ENCODE measurements at regions of chr12 and their contacts with region 1.

Region 1: DNA sequence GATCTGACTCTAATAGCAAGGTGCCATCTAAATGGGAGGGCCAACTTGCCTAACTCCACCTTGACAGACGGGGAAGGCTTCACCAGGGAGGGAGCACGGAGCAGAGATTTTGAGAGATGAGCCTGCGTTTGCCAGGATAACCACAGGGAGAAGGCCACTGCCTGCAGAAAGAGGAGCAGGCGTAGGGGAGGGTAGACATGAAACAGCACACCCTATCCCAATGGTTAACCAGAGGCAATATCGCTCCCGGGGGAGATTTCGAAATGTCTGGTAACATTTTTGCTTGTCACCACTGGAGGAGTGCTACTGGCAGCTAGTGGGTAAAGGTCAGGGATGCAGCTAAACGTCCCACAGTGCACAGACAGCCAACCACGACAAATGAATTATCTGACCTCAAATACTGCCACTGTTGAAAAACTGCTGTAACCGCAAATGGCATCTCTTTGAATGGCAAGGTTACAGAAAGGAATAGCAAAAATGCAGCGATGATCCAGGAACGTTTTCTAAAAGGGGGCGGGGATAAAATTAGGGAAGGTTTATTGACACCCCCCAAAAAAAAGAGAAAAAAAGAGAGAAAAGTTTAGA is 126.0 kb upstream of the ATF7IP start:
- DNase-seq: peak; percentile 60
- H3K4me3 Mint-ChIP-seq: peak overlapping the region; percentile 68
- H3K27ac Mint-ChIP-seq: peak overlapping the region; percentile 79
- H3K4me1 Mint-ChIP-seq: peaks cover 20% of the 10 kb centered on the region
- H3K27me3 Mint-ChIP-seq: no peaks in the 10 kb centered on the region

Region 2: GRCh38 chr12:13870255-13870654 is 369.2 kb before region 1 on chr12:
- CTCF ChIA-PET with region 1: no interaction called
- intact Hi-C with region 1: no loop called
- DNase-seq: no peak
- H3K4me3 Mint-ChIP-seq: no peak overlapping the region
- H3K27ac Mint-ChIP-seq: no peak overlapping the region
- H3K4me1 Mint-ChIP-seq: no peaks in the 10 kb centered on the region
- H3K27me3 Mint-ChIP-seq: peaks cover 7% of the 10 kb centered on the region

Region 3: DNA sequence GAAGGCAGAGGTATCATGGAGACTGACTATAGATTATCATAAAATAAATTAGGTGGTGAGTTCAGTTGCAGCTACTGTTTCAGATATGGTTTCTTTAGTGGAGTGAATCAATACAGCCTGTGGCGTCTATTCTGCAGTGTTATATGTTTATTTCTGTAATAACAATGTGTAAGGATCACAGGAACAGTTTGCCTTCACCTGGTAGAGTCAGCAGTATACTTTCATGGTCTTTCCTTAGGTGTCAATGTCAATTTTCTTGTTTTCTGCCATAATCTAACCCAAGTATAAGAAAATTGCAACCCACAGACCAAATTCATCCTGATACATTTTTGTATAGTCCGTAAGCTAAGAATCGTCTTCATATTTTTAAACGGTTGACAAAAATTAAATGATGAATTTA is 14.4 kb before region 1 on chr12:
- CTCF ChIA-PET with region 1: interaction called, 13 read pairs
- intact Hi-C with region 1: loop called (anchors 1 kb)
- DNase-seq: no peak
- H3K4me3 Mint-ChIP-seq: no peak overlapping the region
- H3K27ac Mint-ChIP-seq: no peak overlapping the region
- H3K4me1 Mint-ChIP-seq: peaks cover 11% of the 10 kb centered on the region
- H3K27me3 Mint-ChIP-seq: no peaks in the 10 kb centered on the region

Region 4: GRCh38 chr12:14365294-14366208 is 126.1 kb after region 1 on chr12 and contains the start of gene ATF7IP:
- CTCF ChIA-PET with region 1: interaction called, 33 read pairs
- intact Hi-C with region 1: loop called (anchors 1 kb)
- DNase-seq: peak; percentile 98
- H3K4me3 Mint-ChIP-seq: peak within 1 kb of the TSS; percentile 85
- H3K27ac Mint-ChIP-seq: peak within 1 kb of the TSS; percentile 98
- H3K4me1 Mint-ChIP-seq: peaks cover 38% of the 10 kb centered on the region
- H3K27me3 Mint-ChIP-seq: no peaks in the 10 kb centered on the region
- total RNA-seq, gene ATF7IP: 131 to 141 TPM

Region 5: DNA sequence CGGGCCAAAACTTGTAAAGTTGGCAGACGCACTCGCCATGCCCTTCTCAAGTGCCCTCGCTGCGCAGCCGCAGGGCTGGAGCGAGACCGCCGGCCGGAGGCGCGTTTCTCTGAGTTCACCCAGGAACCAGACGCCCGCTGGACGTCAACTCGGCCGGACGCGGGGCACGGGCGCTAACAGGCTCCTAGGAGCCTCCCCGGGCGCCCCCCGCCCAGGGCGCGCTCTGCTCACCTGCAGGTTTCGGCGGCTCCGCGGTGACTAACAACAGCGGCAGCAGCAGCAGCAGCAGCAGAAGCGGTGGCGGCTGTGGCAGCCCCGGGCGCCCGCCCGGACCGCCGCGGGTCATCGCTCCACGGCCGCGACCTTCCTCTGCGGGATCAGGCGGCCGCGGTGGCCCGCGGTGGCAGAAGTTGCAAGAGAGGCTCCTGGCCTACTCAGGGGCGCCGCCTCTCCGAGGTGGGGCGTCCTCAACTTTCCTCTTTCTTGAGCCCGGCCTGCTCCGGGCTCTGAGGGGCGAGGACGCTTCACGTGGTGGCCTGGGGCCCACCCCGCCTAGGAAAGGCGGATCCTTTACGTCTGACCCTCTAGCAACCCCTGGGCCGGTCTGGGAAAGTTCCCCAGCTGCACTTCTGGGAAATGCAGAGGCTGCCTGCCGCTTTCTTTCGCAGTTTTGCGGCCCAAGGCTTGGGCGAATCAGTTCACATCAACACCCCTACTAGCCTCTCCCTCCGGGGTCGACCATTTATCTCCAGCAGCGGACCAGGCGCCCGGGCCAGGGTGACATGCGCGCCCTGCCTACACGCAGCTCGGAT is 328.1 kb after region 1 on chr12 and contains the start of gene PLBD1:
- CTCF ChIA-PET with region 1: interaction called, 3 read pairs
- intact Hi-C with region 1: loop called (anchors 2 kb)
- DNase-seq: peak; percentile 30
- H3K4me3 Mint-ChIP-seq: peak within 1 kb of the TSS; percentile 30
- H3K27ac Mint-ChIP-seq: no peak within 1 kb of the TSS
- H3K4me1 Mint-ChIP-seq: peaks cover 3% of the 10 kb centered on the region
- H3K27me3 Mint-ChIP-seq: peaks cover 31% of the 10 kb centered on the region
- total RNA-seq, gene PLBD1: not detected

Region 6: DNA sequence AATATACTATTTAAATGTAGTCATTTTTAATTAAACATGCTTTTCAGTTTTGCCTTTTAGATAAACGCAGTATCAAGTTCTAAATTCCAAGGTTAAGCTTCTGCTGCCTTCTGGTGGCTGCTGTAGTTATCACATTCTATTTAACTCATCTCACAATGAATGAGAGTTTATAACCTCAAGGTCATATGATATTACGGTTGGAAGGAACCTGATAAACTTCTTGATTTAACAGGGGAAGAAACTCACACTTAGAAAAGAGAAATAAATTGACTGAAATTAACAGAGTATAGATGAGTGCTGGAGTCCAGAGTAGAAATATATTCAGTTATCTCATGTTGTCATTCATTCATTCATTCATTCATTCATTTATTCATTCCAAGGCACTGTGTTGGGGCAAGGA is 425.1 kb after region 1 on chr12:
- CTCF ChIA-PET with region 1: interaction called, 20 read pairs
- intact Hi-C with region 1: loop called (anchors 1 kb)
- DNase-seq: peak; percentile 61
- H3K4me3 Mint-ChIP-seq: no peak overlapping the region
- H3K27ac Mint-ChIP-seq: no peak overlapping the region
- H3K4me1 Mint-ChIP-seq: peaks cover 2% of the 10 kb centered on the region
- H3K27me3 Mint-ChIP-seq: peaks cover 2% of the 10 kb centered on the region